Sigmoid colon (tissue), 7 donors: ENCODE measurements at regions of chr15 and their contacts with region 1.

Region 1: GRCh38 chr15:50765195-50765973 is at the start of gene SPPL2A:
- DNase-seq: peak; percentile 91
- H3K4me3 ChIP-seq: peak within 1 kb of the TSS; percentile 88 to 94 (median 90)
- H3K27ac ChIP-seq: peak within 1 kb of the TSS; percentile 97 to 99 (median 98)
- H3K4me1 ChIP-seq: peaks cover 0 to 19% (median 15%) of the 10 kb centered on the region in 4 donors
- H3K27me3 ChIP-seq: no peaks in the 10 kb centered on the region
- CTCF ChIP-seq: no peak
- EP300 ChIP-seq: no peak
- POLR2A ChIP-seq: peak; percentile 59 to 76
- total RNA-seq, gene SPPL2A: 98.6 to 303 (median 140) TPM

Region 2: DNA sequence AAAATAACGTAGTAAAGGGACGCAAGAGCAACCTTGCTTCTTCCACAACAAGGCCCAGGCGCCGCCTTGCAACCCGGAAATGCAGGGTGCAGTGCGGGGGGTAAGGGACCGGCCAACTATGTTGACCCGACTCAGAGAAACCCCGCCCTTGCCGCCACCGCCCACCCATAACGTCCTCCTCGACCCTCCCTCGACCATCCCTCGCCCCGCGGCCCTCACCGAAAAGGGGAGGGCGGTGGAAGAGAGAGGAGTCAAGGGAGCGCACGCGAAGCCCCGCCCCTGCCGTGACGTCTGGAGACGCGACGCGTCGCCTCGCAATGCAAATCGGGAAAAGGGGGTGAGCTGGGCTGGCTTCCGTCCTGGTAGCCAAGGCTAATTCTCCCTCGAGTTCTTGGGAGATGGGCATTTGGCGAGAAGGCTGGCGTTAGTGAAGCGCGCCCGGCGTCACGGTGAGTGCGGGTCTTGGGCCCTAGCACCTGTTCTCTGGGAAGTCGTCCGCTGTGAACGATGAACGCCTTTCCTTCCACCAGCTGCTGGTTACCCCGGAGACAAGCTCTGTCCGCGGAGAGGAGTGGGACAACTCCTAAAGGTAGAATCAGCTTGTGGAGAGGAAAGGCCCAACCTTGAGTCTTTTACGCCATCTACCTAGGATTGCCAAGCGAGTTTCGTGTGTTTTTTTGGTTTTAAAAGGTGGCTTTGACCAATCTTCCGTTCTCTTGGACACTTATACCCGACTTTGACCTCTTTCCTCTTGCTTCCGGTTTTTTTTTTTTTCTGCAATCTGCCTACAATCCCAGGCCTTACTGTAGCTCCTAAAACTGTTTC is 341.1 kb before region 1 on chr15 and contains the start of gene USP8:
- intact Hi-C with region 1: loop called (anchors 10 kb)
- DNase-seq: peak; percentile 97
- H3K4me3 ChIP-seq: peak within 1 kb of the TSS; percentile 69 to 76 (median 71)
- H3K27ac ChIP-seq: peak within 1 kb of the TSS; percentile 87 to 90 (median 88)
- H3K4me1 ChIP-seq: peaks cover 0 to 35% (median 23%) of the 10 kb centered on the region in 4 donors
- H3K27me3 ChIP-seq: no peaks in the 10 kb centered on the region
- CTCF ChIP-seq: no peak
- EP300 ChIP-seq: no peak
- POLR2A ChIP-seq: peak; percentile 70 to 89
- total RNA-seq, gene USP8: 49.4 to 59.2 (median 50.1) TPM

Region 3: DNA sequence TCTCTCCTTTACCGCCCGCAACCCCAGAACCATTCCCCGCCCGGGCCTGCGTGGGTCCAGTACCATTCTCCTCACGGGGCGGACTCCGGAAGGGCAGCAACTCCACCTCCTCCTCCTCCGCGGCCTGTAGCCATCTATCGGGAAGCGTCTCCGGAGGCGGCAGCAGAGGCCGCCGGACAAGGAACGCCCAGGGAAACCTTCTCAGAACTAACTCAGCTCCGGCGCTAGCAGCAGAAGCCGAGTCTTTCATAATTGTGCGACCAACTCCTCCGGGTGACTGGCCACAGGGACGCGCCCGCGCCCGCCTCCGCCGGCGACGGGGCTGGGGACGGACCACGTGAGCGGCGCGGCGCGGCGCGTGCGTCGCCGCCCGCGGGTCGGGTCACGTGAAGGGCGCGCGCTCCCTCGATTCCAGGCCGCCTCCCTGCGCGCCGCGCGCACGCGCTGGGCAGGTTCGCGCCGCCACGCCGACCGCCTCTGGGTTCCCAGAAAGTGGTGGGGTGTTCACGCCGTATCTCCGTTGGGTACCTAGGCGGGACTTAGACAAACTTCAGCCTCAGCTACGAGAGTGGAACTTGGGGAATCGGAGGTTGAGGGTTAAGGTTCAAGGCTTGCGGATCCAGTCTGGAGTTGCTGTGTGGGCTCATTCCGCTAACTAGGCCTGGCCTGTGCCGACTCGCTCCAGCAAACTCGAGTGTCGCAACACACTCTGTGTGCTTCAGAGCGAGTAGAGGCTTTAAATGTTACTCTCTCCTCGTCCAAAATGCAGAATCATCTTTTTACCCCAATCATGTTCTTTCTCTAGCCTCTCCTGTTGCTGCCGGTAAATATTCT is 78.7 kb before region 1 on chr15 and contains the start of gene TRPM7:
- intact Hi-C with region 1: loop called (anchors 2 kb)
- DNase-seq: peak; percentile 93
- H3K4me3 ChIP-seq: peak within 1 kb of the TSS; percentile 65 to 90 (median 76)
- H3K27ac ChIP-seq: peak within 1 kb of the TSS; percentile 94 to 97 (median 96)
- H3K4me1 ChIP-seq: peaks cover 0 to 36% (median 31%) of the 10 kb centered on the region in 4 donors
- H3K27me3 ChIP-seq: no peaks in the 10 kb centered on the region
- CTCF ChIP-seq: no peak
- EP300 ChIP-seq: no peak
- POLR2A ChIP-seq: peak; percentile 29 to 51
- total RNA-seq, gene TRPM7: 32.2 to 53.7 (median 42.6) TPM

Region 4: DNA sequence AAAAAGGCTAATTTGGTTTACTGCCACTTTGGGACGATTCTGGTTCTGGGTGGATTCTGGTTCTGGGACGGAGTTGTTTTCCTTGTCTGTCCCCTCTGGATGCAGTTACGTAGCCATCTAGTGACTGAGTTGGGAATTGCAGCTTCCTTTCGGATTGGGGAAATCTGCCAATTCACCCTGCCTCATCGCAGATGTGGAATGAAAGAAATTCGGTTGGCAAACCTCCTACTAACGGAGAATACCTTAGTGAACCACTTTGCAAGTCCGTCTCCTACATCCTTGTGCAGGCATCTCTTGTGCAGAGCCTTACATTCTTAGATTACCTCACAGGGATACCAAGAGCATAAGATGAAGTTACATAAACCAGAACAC is 111.6 kb after region 1 on chr15:
- intact Hi-C with region 1: loop called (anchors 5 kb)
- DNase-seq: peak; percentile 86
- H3K4me3 ChIP-seq: peak overlapping the region; percentile 13 to 47 (median 36)
- H3K27ac ChIP-seq: peak overlapping the region in 3 of 4 donors; percentile 35 to 62 (median 54)
- H3K4me1 ChIP-seq: peaks cover 0 to 11% (median 3%) of the 10 kb centered on the region in 4 donors
- H3K27me3 ChIP-seq: no peaks in the 10 kb centered on the region
- CTCF ChIP-seq: peak; percentile 89 to 97 (median 94)
- EP300 ChIP-seq: no peak
- POLR2A ChIP-seq: no peak

Region 5: DNA sequence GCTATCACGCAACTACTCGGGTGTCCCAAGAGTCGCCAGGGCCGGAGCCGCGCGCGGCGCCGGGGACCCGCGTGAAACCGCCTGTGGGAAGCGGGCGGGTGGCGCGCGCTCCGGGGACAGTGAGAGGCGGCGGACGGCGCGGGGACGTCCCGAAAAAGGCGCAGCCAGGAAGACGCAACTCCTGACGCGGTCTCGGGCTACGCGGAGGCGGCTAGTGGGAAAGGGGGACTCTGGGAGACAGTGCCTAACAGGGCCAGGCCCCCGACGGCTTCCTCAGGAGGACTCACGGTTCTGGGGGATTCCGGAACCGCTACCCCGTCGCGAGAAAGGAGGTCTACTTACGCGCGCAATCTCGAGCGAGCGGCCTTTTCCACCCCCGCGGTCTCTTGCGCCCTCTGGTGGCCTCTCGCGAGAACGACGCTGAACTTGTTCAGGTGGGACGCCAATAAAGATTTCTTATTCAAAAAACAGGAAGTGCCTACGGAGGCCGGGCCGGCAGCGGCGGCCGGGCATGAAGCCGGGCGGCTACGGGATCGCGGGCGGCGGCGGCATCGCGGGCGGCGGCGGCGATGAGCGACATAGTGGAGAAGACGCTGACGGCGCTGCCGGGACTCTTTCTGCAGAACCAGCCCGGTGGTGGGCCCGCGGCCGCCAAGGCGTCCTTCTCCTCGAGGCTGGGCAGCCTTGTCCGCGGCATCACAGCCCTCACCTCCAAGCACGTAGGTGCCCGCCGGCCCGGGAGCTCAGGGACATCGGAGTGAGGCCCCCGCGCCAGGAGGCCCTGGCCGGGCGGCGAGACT is 143.0 kb after region 1 on chr15 and contains the start of gene AP4E1:
- intact Hi-C with region 1: loop called (anchors 10 kb)
- DNase-seq: peak; percentile 96
- H3K4me3 ChIP-seq: peak within 1 kb of the TSS; percentile 78 to 96 (median 92)
- H3K27ac ChIP-seq: peak within 1 kb of the TSS; percentile 90 to 95 (median 93)
- H3K4me1 ChIP-seq: peaks cover 0 to 33% (median 26%) of the 10 kb centered on the region in 4 donors
- H3K27me3 ChIP-seq: no peaks in the 10 kb centered on the region
- CTCF ChIP-seq: peak; percentile 83 to 96 (median 90)
- EP300 ChIP-seq: no peak
- POLR2A ChIP-seq: peak in 1 of 2 donors; percentile 17
- total RNA-seq, gene AP4E1: 7.3 to 8.3 (median 8.0) TPM